ENCODE measurements at regions of chr14 and their contacts with region 1.

Region 1: GRCh38 chr14:22556990-22557623 is 31.9 kb downstream of the DAD1 start:
- DNase-seq: peak; percentile 88
- H3K4me3 ChIP-seq: peak overlapping the region; percentile 27
- H3K27ac ChIP-seq: peak overlapping the region; percentile 72
- H3K4me1 ChIP-seq: peaks cover 63% of the 10 kb centered on the region
- H3K27me3 ChIP-seq: no peaks in the 10 kb centered on the region
- CTCF ChIP-seq: peak; percentile 100

Region 2: GRCh38 chr14:21626491-21627230 is 930.4 kb before region 1 on chr14:
- CTCF ChIA-PET with region 1: no interaction called
- POLR2A ChIA-PET with region 1: no interaction called
- intact Hi-C with region 1: no loop called
- DNase-seq: no peak
- H3K4me3 ChIP-seq: no peak overlapping the region
- H3K27ac ChIP-seq: no peak overlapping the region
- H3K4me1 ChIP-seq: peaks cover 11% of the 10 kb centered on the region
- H3K27me3 ChIP-seq: no peaks in the 10 kb centered on the region
- CTCF ChIP-seq: no peak

Region 3: GRCh38 chr14:22303589-22304195 is 253.4 kb before region 1 on chr14:
- CTCF ChIA-PET with region 1: no interaction called
- POLR2A ChIA-PET with region 1: no interaction called
- intact Hi-C with region 1: loop called (anchors 5 kb)
- DNase-seq: peak; percentile 63
- H3K4me3 ChIP-seq: peak overlapping the region; percentile 15
- H3K27ac ChIP-seq: peak overlapping the region; percentile 78
- H3K4me1 ChIP-seq: peaks cover 29% of the 10 kb centered on the region
- H3K27me3 ChIP-seq: no peaks in the 10 kb centered on the region
- CTCF ChIP-seq: peak; percentile 74

Region 4: GRCh38 chr14:22653012-22653621 is 96.0 kb after region 1 on chr14:
- CTCF ChIA-PET with region 1: interaction called, 6 read pairs
- POLR2A ChIA-PET with region 1: no interaction called
- intact Hi-C with region 1: loop called (anchors 1 kb)
- DNase-seq: peak; percentile 80
- H3K4me3 ChIP-seq: no peak overlapping the region
- H3K27ac ChIP-seq: no peak overlapping the region
- H3K4me1 ChIP-seq: peaks cover 14% of the 10 kb centered on the region
- H3K27me3 ChIP-seq: no peaks in the 10 kb centered on the region
- CTCF ChIP-seq: peak; percentile 89

Region 5: GRCh38 chr14:23057757-23058653 is 500.9 kb after region 1 on chr14:
- CTCF ChIA-PET with region 1: no interaction called
- POLR2A ChIA-PET with region 1: no interaction called
- intact Hi-C with region 1: loop called (anchors 10 kb)
- DNase-seq: peak; percentile 93
- H3K4me3 ChIP-seq: peak overlapping the region; percentile 76
- H3K27ac ChIP-seq: peak overlapping the region; percentile 77
- H3K4me1 ChIP-seq: peaks cover 27% of the 10 kb centered on the region
- H3K27me3 ChIP-seq: no peaks in the 10 kb centered on the region
- CTCF ChIP-seq: peak; percentile 98